ENCODE measurements at regions of chr9 and their contacts with region 1.

Region 1: DNA sequence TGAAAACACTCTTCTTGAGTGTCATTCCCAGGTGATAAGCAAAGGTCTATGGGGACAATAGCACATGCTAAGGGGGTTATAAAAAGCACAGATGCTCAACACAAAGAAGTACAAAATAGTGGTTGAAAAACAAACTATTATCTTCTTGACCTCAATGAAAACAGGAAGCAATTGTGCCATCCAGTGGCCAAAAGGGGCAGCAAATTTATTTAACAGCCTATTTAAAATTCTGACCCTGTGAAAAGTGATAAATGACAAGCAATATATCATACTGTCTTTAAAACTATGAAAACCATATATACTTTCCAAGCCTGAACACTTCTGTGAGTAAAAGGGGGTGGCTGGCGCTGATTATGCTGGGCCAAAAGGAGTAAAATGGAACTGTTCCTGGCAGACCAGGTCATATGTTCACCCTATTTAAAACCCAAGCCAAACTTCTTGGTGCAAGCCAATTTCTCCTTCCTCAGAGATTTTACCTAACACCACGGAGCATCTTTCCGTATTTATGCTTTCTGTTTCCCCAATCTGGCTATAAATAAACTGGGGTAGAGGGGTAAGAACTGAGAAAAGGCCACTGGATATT is 29.7 kb downstream of the TEX10 start:
- DNase-seq: peak; percentile 46
- H3K4me3 Mint-ChIP-seq: no peak overlapping the region
- H3K27ac Mint-ChIP-seq: no peak overlapping the region
- H3K4me1 Mint-ChIP-seq: peaks cover 3% of the 10 kb centered on the region
- H3K27me3 Mint-ChIP-seq: no peaks in the 10 kb centered on the region
- CTCF ChIP-seq: peak; percentile 27

Region 2: DNA sequence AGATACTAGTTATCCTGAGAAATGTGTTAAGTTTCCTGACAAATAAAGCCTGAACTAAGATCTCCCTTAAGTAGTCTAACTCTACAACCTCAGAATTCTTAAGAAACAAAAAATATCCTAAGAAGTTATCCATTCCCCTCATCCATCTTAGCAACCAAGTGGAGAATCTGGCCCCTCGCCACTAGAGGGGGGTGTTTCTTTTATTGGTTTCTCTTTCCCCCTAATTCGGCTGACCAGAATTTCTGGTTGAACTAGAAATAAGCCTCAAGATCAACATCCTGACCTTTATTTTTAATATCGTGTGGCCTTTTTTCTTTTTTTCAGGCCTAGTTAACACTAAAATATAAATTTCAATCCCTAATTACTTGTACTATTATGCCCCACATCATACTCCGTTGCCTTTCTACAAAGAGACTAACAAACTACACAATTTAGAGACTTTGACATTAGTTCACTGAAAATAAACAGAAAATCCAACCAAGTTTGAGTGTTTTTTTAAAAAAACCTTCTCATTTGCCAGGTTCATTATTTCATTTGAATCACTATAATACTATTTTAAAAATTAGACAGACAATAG is 515.7 kb before region 1 on chr9:
- CTCF ChIA-PET with region 1: interaction called, 3 read pairs
- POLR2A ChIA-PET with region 1: no interaction called
- intact Hi-C with region 1: loop called (anchors 5 kb)
- DNase-seq: peak; percentile 83
- H3K4me3 Mint-ChIP-seq: no peak overlapping the region
- H3K27ac Mint-ChIP-seq: no peak overlapping the region
- H3K4me1 Mint-ChIP-seq: no peaks in the 10 kb centered on the region
- H3K27me3 Mint-ChIP-seq: no peaks in the 10 kb centered on the region
- CTCF ChIP-seq: peak; percentile 80

Region 3: GRCh38 chr9:100340224-100340623 is 17.2 kb after region 1 on chr9:
- CTCF ChIA-PET with region 1: interaction called, 67 read pairs
- POLR2A ChIA-PET with region 1: interaction called, 3 read pairs
- intact Hi-C with region 1: no loop called
- DNase-seq: no peak
- H3K4me3 Mint-ChIP-seq: no peak overlapping the region
- H3K27ac Mint-ChIP-seq: no peak overlapping the region
- H3K4me1 Mint-ChIP-seq: peaks cover 16% of the 10 kb centered on the region
- H3K27me3 Mint-ChIP-seq: no peaks in the 10 kb centered on the region
- CTCF ChIP-seq: no peak

Region 4: GRCh38 chr9:100346836-100347235 is 23.8 kb after region 1 on chr9:
- CTCF ChIA-PET with region 1: interaction called, 44 read pairs
- POLR2A ChIA-PET with region 1: interaction called, 4 read pairs
- intact Hi-C with region 1: no loop called
- DNase-seq: peak; percentile 23
- H3K4me3 Mint-ChIP-seq: no peak overlapping the region
- H3K27ac Mint-ChIP-seq: no peak overlapping the region
- H3K4me1 Mint-ChIP-seq: peaks cover 28% of the 10 kb centered on the region
- H3K27me3 Mint-ChIP-seq: no peaks in the 10 kb centered on the region
- CTCF ChIP-seq: no peak

Region 5: GRCh38 chr9:100352727-100353505 is 29.9 kb after region 1 on chr9 and contains the start of gene TEX10:
- CTCF ChIA-PET with region 1: interaction called, 33 read pairs
- POLR2A ChIA-PET with region 1: interaction called, 4 read pairs
- intact Hi-C with region 1: no loop called
- DNase-seq: peak; percentile 82
- H3K4me3 Mint-ChIP-seq: peak within 1 kb of the TSS; percentile 94
- H3K27ac Mint-ChIP-seq: peak within 1 kb of the TSS; percentile 95
- H3K4me1 Mint-ChIP-seq: peaks cover 35% of the 10 kb centered on the region
- H3K27me3 Mint-ChIP-seq: no peaks in the 10 kb centered on the region
- CTCF ChIP-seq: no peak
- total RNA-seq, gene TEX10: 37.0 and 38.2 TPM in 2 replicates

Region 6: DNA sequence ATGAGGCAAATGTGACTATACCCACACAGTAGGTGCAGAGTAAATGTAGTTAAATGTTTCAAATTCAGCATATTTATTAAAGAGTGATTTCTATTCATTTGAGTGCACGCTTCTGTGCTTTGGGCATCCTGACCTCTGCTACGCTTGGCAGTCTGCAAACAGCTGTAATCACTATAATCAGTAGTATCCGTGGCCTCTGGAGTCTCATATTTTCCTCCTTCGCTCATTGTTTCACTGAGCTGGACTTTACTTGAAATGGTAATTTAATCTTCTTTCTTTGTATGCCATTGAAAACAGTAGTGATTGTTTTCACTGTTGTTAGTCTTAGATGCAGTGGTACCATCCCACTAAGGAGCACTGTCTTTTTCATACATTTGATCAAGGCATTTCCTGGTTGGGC is 211.3 kb after region 1 on chr9:
- CTCF ChIA-PET with region 1: no interaction called
- POLR2A ChIA-PET with region 1: no interaction called
- intact Hi-C with region 1: no loop called
- DNase-seq: no peak
- H3K4me3 Mint-ChIP-seq: no peak overlapping the region
- H3K27ac Mint-ChIP-seq: no peak overlapping the region
- H3K4me1 Mint-ChIP-seq: no peaks in the 10 kb centered on the region
- H3K27me3 Mint-ChIP-seq: no peaks in the 10 kb centered on the region
- CTCF ChIP-seq: no peak